H1 (cell line): ENCODE measurements at regions of chr12 and their contacts with region 1.

Region 1: DNA sequence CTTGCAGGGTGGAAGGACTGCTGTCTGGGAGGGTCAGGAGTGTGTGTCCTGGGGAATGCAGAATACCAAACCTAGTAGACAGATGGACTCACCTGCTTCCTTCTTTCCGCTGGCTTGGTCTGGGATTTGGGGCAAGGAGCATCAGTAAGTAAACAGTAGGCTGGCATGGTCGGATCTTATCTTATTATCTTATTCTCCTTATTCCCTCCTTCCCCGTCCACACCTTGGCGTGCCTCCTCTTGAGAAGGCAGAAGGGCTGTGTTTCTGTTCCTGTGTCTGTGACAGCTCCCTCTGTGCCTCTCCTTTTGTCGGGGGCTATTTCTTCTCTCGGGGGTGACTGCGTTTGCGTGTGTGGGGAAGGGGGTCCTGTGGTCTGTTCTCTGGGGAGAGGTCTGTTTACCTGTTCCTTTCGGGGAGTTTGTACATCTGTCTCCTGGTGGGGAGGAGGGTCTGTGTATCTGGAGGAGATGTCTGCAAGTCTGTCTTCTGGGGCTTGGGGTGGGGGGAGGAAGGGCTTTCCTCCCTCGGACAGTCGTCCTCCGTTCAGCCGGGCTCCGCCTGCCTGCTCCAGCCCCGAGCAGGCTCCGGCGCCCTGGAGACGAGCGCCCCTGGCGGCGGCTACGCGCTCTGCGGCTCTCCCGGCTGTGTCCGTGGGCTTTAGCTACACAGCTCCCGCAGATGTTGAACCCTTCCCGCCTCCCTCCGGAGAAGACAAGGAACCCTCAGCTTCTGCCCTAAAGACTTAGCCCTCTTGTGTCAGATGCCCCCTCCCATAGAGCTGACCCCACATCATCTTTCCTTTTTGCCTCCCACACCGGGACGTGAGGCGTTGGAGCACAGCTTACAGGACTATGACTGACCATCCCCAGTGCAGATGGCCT is 4.3 kb downstream of the KRT86 start:
- DNase-seq: peak; percentile 33 to 96
- H3K4me3 ChIP-seq: peak overlapping the region; percentile 18 to 57 (median 32); a peak in 5 of 8 replicates
- H3K27ac ChIP-seq: no peak overlapping the region
- H3K4me1 ChIP-seq: peaks cover 0 to 4% (median 0%) of the 10 kb centered on the region in 4 experiments; a peak in 1 of 7 replicates
- H3K27me3 ChIP-seq: peaks cover 0 to 12% (median 5%) of the 10 kb centered on the region in 4 experiments; a peak in 4 of 7 replicates
- CTCF ChIP-seq: peak; percentile 93 to 96 (median 95)
- EP300 ChIP-seq: no peak
- POLR2A ChIP-seq: no peak
- RAD21 ChIP-seq: peak; percentile 70 to 80

Region 2: GRCh38 chr12:52069327-52070184 is 209.2 kb before region 1 on chr12 and contains the start of gene ATG101:
- CTCF ChIA-PET with region 1: no interaction called
- POLR2A ChIA-PET with region 1: no interaction called
- DNase-seq: peak; percentile 82 to 90
- H3K4me3 ChIP-seq: peak within 1 kb of the TSS; percentile 89 to 97 (median 95)
- H3K27ac ChIP-seq: peak within 1 kb of the TSS; percentile 99
- H3K4me1 ChIP-seq: peaks cover 0 to 12% (median 3%) of the 10 kb centered on the region in 4 experiments; a peak in 4 of 7 replicates
- H3K27me3 ChIP-seq: no peaks in the 10 kb centered on the region; a peak in 2 of 7 replicates
- CTCF ChIP-seq: peak; percentile 88 to 96 (median 96)
- EP300 ChIP-seq: peak in 1 of 2 experiments; percentile 100; a peak in 2 of 3 replicates
- POLR2A ChIP-seq: peak in 1 of 2 experiments; percentile 69; a peak in 1 of 3 replicates
- RAD21 ChIP-seq: peak; percentile 19 to 29; a peak in 3 of 4 replicates
- total RNA-seq, gene ATG101: 48.9 and 49.8 TPM in 2 replicates

Region 3: DNA sequence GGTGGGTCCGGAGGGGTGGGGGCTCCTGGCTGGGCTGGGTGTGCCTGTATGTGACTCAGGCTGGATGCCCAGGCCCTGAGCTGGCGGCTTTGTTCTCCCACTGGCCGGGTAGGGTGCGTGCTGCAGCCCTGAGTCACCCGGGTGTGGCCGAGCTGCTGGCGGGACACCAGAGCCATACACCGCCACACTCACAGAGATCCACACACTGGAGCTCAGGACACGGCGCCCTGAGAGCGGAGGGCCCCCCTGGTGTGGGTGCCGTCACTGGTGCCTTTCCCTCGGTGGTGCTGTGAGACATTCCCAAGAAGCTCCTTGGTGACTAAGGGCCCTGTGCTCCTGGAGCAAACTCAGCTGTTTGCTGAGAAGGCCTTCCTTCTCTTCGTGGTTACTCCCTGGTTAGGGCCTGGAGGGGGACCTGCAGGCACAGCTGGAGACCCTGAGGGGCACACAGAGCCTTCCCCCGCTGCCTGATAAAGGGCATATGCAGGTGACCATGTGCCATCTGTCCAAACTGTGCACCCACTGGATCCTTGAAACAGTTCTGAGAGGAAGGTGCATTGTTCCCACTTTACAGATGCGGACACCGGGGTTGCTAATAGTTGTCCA is 131.3 kb before region 1 on chr12:
- CTCF ChIA-PET with region 1: interaction called, 13 read pairs
- POLR2A ChIA-PET with region 1: no interaction called
- DNase-seq: no peak
- H3K4me3 ChIP-seq: no peak overlapping the region
- H3K27ac ChIP-seq: peak overlapping the region; percentile 73
- H3K4me1 ChIP-seq: peaks cover 8 to 44% (median 19%) of the 10 kb centered on the region in 4 experiments
- H3K27me3 ChIP-seq: no peaks in the 10 kb centered on the region; a peak in 1 of 7 replicates
- CTCF ChIP-seq: no peak
- EP300 ChIP-seq: no peak
- POLR2A ChIP-seq: no peak
- RAD21 ChIP-seq: no peak

Region 4: DNA sequence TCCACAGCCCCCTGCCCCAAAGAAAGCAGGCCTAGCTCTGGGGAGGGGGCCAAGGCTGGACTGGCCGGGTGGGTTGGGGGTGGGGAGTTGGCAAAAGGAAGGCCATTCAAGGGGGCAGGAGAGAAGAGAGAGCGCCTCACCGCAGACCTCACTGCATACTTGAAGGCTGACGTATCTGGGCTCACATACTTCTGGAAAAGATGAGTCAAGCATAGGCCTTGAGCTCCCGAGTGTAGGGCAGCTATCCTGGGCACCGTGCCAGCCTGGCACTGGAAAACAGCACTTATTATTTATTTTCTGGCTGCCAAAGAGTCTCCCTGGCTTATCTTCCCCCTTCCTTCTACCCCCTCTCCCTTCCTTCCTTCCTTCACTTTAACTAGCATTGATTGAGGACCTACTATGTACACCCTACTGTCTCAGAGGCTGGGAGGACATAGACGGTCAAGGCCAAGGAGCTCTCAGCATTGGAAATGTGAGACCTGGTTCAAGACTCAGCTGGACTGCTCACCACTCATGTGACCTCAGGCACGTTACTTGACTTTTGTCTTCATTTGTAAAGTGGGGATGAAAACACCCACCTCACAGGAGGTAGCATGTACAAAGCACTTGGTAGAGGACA is 86.5 kb before region 1 on chr12:
- CTCF ChIA-PET with region 1: interaction called, 13 read pairs
- POLR2A ChIA-PET with region 1: no interaction called
- DNase-seq: no peak
- H3K4me3 ChIP-seq: no peak overlapping the region
- H3K27ac ChIP-seq: no peak overlapping the region
- H3K4me1 ChIP-seq: peaks cover 0 to 11% (median 6%) of the 10 kb centered on the region in 4 experiments; a peak in 4 of 7 replicates
- H3K27me3 ChIP-seq: no peaks in the 10 kb centered on the region
- CTCF ChIP-seq: no peak
- EP300 ChIP-seq: no peak
- POLR2A ChIP-seq: no peak
- RAD21 ChIP-seq: no peak

Region 5: GRCh38 chr12:52230327-52231291 is 48.2 kb before region 1 on chr12:
- CTCF ChIA-PET with region 1: interaction called, 34 read pairs
- POLR2A ChIA-PET with region 1: interaction called, 3 read pairs
- DNase-seq: no peak
- H3K4me3 ChIP-seq: no peak overlapping the region
- H3K27ac ChIP-seq: no peak overlapping the region
- H3K4me1 ChIP-seq: peaks cover 0 to 25% (median 18%) of the 10 kb centered on the region in 4 experiments; a peak in 6 of 7 replicates
- H3K27me3 ChIP-seq: peaks cover 0 to 48% (median 25%) of the 10 kb centered on the region in 4 experiments; a peak in 6 of 7 replicates
- CTCF ChIP-seq: no peak
- EP300 ChIP-seq: peak in 1 of 2 experiments; percentile 91; a peak in 1 of 3 replicates
- POLR2A ChIP-seq: no peak
- RAD21 ChIP-seq: no peak

Region 6: DNA sequence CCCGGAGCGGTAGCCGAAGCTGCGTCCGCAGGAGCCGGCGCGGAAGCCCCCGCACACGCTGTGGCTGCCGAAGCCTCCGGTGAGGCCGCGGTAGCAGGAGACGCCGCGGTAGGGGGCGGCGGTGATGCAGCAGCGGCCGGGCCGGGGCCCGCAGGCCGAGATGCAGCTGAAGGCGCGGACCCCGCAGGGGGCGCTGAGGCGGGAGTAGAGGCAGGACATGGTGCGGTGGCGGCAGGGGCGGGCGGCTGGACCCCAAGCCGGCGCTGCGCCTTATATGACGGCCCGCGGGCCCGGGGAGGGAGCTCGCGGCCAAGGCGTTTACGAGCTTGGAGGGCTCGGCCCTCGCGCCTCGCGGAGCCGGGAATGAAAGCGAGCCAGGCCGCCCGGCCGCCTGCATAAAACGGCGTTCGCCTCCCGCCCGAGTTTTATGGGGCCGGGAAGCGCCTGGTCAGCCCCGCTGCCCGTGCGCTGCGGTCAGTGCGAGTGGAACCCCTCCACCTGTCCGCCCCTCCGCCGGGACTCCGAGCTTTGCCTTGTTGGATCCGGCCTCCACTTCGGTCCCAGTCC is 20.4 kb before region 1 on chr12:
- CTCF ChIA-PET with region 1: interaction called, 105 read pairs
- POLR2A ChIA-PET with region 1: interaction called, 5 read pairs
- DNase-seq: peak in 1 of 2 experiments; percentile 75
- H3K4me3 ChIP-seq: peak overlapping the region in 3 of 4 experiments; percentile 7 to 44 (median 26); a peak in 4 of 8 replicates
- H3K27ac ChIP-seq: no peak overlapping the region
- H3K4me1 ChIP-seq: peaks cover 0 to 6% (median under 1%) of the 10 kb centered on the region in 4 experiments; a peak in 3 of 7 replicates
- H3K27me3 ChIP-seq: peaks cover 14 to 44% (median 37%) of the 10 kb centered on the region in 4 experiments
- CTCF ChIP-seq: peak in 1 of 3 experiments; percentile 6; a peak in 1 of 4 replicates
- EP300 ChIP-seq: no peak
- POLR2A ChIP-seq: no peak
- RAD21 ChIP-seq: no peak

Region 7: GRCh38 chr12:52307836-52308805 is 29.3 kb after region 1 on chr12:
- CTCF ChIA-PET with region 1: interaction called, 99 read pairs
- POLR2A ChIA-PET with region 1: no interaction called
- DNase-seq: peak; percentile 23 to 83
- H3K4me3 ChIP-seq: peak overlapping the region; percentile 39 to 67 (median 61)
- H3K27ac ChIP-seq: no peak overlapping the region
- H3K4me1 ChIP-seq: peaks cover 0 to 4% (median 0%) of the 10 kb centered on the region in 4 experiments; a peak in 1 of 7 replicates
- H3K27me3 ChIP-seq: peaks cover 21 to 47% (median 36%) of the 10 kb centered on the region in 4 experiments
- CTCF ChIP-seq: peak in 2 of 3 experiments; percentile 14 to 24; a peak in 2 of 4 replicates
- EP300 ChIP-seq: no peak
- POLR2A ChIP-seq: no peak
- RAD21 ChIP-seq: peak in 1 of 2 experiments; percentile 15; a peak in 1 of 4 replicates

Region 8: DNA sequence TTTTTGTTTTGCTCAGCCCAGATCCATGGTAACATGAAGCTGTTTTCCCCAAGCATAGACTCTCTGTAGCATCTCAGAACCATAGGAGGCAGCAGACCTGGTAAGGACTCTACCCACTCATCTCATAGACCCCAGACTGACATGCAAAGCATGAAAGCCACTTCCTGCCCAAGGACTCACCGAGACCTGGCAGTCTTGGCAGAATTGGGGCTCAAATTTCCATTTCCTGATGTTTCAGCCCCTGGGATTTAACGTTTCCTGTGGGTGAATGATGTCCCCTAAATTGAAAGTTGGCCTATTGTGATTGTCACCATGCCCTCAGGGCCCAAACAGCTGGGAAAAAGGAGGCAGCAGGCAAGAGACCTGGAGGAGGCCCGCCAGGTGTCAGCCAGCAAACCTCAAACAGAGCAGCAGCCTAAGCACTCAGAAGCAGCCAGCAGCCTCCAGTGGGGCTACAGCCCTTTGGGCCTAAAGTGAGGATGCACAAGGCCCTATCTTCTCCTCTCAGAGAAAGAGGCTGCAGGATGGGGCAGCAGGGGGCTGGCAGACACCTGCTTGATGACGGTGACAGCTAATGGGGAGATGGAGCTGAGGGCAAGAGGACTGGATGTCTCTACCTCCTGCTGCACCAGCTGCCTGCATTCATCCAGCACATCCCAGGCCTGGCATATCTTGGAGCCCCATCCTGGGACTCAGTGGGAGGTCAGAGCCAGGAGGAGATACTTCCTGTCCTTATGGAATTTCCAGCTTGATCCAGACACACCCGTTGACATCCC is 80.0 kb after region 1 on chr12:
- CTCF ChIA-PET with region 1: interaction called, 23 read pairs
- POLR2A ChIA-PET with region 1: no interaction called
- DNase-seq: no peak
- H3K4me3 ChIP-seq: no peak overlapping the region
- H3K27ac ChIP-seq: no peak overlapping the region
- H3K4me1 ChIP-seq: no peaks in the 10 kb centered on the region
- H3K27me3 ChIP-seq: no peaks in the 10 kb centered on the region
- CTCF ChIP-seq: no peak
- EP300 ChIP-seq: no peak
- POLR2A ChIP-seq: no peak
- RAD21 ChIP-seq: no peak

Region 9: GRCh38 chr12:52407918-52408317 is 129.1 kb after region 1 on chr12:
- CTCF ChIA-PET with region 1: no interaction called
- POLR2A ChIA-PET with region 1: no interaction called
- DNase-seq: no peak
- H3K4me3 ChIP-seq: no peak overlapping the region
- H3K27ac ChIP-seq: no peak overlapping the region
- H3K4me1 ChIP-seq: peaks cover 0 to 2% (median under 1%) of the 10 kb centered on the region in 4 experiments; a peak in 1 of 7 replicates
- H3K27me3 ChIP-seq: no peaks in the 10 kb centered on the region
- CTCF ChIP-seq: peak; percentile 26 to 50 (median 28)
- EP300 ChIP-seq: no peak
- POLR2A ChIP-seq: no peak
- RAD21 ChIP-seq: peak; percentile 18 to 24; a peak in 2 of 4 replicates

Region 10: DNA sequence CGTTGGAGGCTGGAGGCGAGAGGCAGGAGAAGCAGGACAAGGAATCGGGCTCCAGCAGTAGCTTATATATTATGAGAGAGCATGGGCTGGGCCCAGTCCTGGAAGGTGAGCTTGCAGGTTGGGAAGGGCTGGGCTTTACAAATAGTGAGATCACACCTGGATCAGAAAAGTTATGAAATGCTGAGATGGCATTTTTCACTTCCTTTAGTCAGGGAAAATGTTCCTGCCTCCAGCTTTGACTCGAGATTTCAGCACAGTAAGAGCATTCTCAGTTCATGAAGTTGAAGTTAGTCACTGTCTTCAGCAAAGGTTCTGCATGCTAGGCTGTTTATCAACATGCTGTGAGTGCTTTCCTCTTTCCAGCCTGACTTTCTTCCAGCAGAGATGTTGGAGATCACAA is 195.0 kb after region 1 on chr12 and contains the start of gene KRT6C:
- CTCF ChIA-PET with region 1: no interaction called
- POLR2A ChIA-PET with region 1: no interaction called
- DNase-seq: no peak
- H3K4me3 ChIP-seq: no peak within 1 kb of the TSS
- H3K27ac ChIP-seq: no peak within 1 kb of the TSS
- H3K4me1 ChIP-seq: no peaks in the 10 kb centered on the region
- H3K27me3 ChIP-seq: no peaks in the 10 kb centered on the region
- CTCF ChIP-seq: no peak
- EP300 ChIP-seq: no peak
- POLR2A ChIP-seq: no peak
- RAD21 ChIP-seq: no peak
- total RNA-seq, gene KRT6C: not detected in 2 replicates